Sigmoid colon (tissue), 7 donors: ENCODE measurements at regions of chrX and their contacts with region 1.

Region 1: GRCh38 chrX:70454441-70455365 is 10.1 kb downstream of the DLG3 start:
- DNase-seq: peak; percentile 81
- H3K4me3 ChIP-seq: peak overlapping the region; percentile 43 to 59 (median 53)
- H3K27ac ChIP-seq: peak overlapping the region; percentile 79 to 89 (median 86)
- H3K4me1 ChIP-seq: peaks cover 0 to 19% (median 0%) of the 10 kb centered on the region in 4 donors
- H3K27me3 ChIP-seq: no peaks in the 10 kb centered on the region
- CTCF ChIP-seq: peak; percentile 54 to 83 (median 71)
- EP300 ChIP-seq: no peak
- POLR2A ChIP-seq: no peak

Region 2: GRCh38 chrX:69158166-69158980 is 1296.3 kb before region 1 on chrX:
- intact Hi-C with region 1: no loop called
- DNase-seq: peak; percentile 85
- H3K4me3 ChIP-seq: no peak overlapping the region
- H3K27ac ChIP-seq: peak overlapping the region in 3 of 4 donors; percentile 22 to 34 (median 30)
- H3K4me1 ChIP-seq: peaks cover 0 to 18% (median 11%) of the 10 kb centered on the region in 4 donors
- H3K27me3 ChIP-seq: no peaks in the 10 kb centered on the region
- CTCF ChIP-seq: peak; percentile 18 to 51 (median 32)
- EP300 ChIP-seq: no peak
- POLR2A ChIP-seq: no peak

Region 3: DNA sequence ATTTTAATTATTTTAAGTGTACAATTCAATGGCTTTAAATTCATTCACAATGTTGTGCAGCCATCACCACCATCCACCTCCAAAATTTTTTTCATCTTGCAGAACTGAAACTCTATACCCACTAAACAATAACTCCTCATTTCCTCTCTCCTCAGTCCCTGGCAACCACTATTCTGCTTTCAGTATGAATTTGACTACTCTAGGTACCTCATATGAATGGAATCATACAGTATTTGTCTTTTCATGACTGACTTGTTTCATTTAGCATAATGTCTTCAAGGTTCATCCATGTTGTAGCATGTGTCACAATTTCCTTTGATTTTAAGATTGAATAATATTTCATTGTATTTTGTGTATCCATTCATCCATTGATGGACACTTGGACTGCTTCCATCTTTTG is 117.9 kb before region 1 on chrX:
- intact Hi-C with region 1: no loop called
- DNase-seq: no peak
- H3K4me3 ChIP-seq: no peak overlapping the region
- H3K27ac ChIP-seq: no peak overlapping the region
- H3K4me1 ChIP-seq: no peaks in the 10 kb centered on the region
- H3K27me3 ChIP-seq: no peaks in the 10 kb centered on the region
- CTCF ChIP-seq: no peak
- EP300 ChIP-seq: no peak
- POLR2A ChIP-seq: no peak

Region 4: GRCh38 chrX:70479922-70480659 is 25.4 kb after region 1 on chrX:
- intact Hi-C with region 1: loop called (anchors 2 kb)
- DNase-seq: no peak
- H3K4me3 ChIP-seq: peak overlapping the region in 3 of 4 donors; percentile 12 to 37 (median 28)
- H3K27ac ChIP-seq: peak overlapping the region; percentile 67 to 77 (median 72)
- H3K4me1 ChIP-seq: peaks cover 0 to 54% (median 31%) of the 10 kb centered on the region in 4 donors
- H3K27me3 ChIP-seq: no peaks in the 10 kb centered on the region
- CTCF ChIP-seq: no peak
- EP300 ChIP-seq: no peak
- POLR2A ChIP-seq: no peak

Region 5: GRCh38 chrX:70552130-70552704 is 97.5 kb after region 1 on chrX:
- intact Hi-C with region 1: loop called (anchors 1 kb)
- DNase-seq: no peak
- H3K4me3 ChIP-seq: no peak overlapping the region
- H3K27ac ChIP-seq: no peak overlapping the region
- H3K4me1 ChIP-seq: no peaks in the 10 kb centered on the region
- H3K27me3 ChIP-seq: no peaks in the 10 kb centered on the region
- CTCF ChIP-seq: no peak
- EP300 ChIP-seq: no peak
- POLR2A ChIP-seq: no peak

Region 6: GRCh38 chrX:70664726-70665125 is 210.0 kb after region 1 on chrX:
- intact Hi-C with region 1: loop called (anchors 2 kb)
- DNase-seq: no peak
- H3K4me3 ChIP-seq: no peak overlapping the region
- H3K27ac ChIP-seq: no peak overlapping the region
- H3K4me1 ChIP-seq: no peaks in the 10 kb centered on the region
- H3K27me3 ChIP-seq: peaks cover 0 to 3% (median 0%) of the 10 kb centered on the region in 3 donors
- CTCF ChIP-seq: no peak
- EP300 ChIP-seq: no peak
- POLR2A ChIP-seq: no peak

Region 7: GRCh38 chrX:70675284-70675683 is 220.6 kb after region 1 on chrX:
- intact Hi-C with region 1: no loop called
- DNase-seq: no peak
- H3K4me3 ChIP-seq: no peak overlapping the region
- H3K27ac ChIP-seq: no peak overlapping the region
- H3K4me1 ChIP-seq: no peaks in the 10 kb centered on the region
- H3K27me3 ChIP-seq: no peaks in the 10 kb centered on the region
- CTCF ChIP-seq: no peak
- EP300 ChIP-seq: no peak
- POLR2A ChIP-seq: no peak

Region 8: GRCh38 chrX:71068049-71068763 is 613.5 kb after region 1 on chrX and contains the start of gene SNX12:
- intact Hi-C with region 1: loop called (anchors 10 kb)
- DNase-seq: peak; percentile 96
- H3K4me3 ChIP-seq: peak within 1 kb of the TSS; percentile 55 to 59 (median 59)
- H3K27ac ChIP-seq: peak within 1 kb of the TSS; percentile 83 to 85 (median 84)
- H3K4me1 ChIP-seq: peaks cover 0 to 6% (median 0%) of the 10 kb centered on the region in 4 donors
- H3K27me3 ChIP-seq: no peaks in the 10 kb centered on the region
- CTCF ChIP-seq: peak in 3 of 4 experiments; percentile 13 to 46 (median 18)
- EP300 ChIP-seq: no peak
- POLR2A ChIP-seq: peak; percentile 9 to 48
- total RNA-seq, gene SNX12: 27.6 to 47.4 (median 38.6) TPM

Region 9: GRCh38 chrX:71236836-71237235 is 782.1 kb after region 1 on chrX:
- intact Hi-C with region 1: no loop called
- DNase-seq: no peak
- H3K4me3 ChIP-seq: no peak overlapping the region
- H3K27ac ChIP-seq: no peak overlapping the region
- H3K4me1 ChIP-seq: no peaks in the 10 kb centered on the region
- H3K27me3 ChIP-seq: no peaks in the 10 kb centered on the region
- CTCF ChIP-seq: no peak
- EP300 ChIP-seq: no peak
- POLR2A ChIP-seq: no peak